Colonic mucosa (tissue), 4 donors: ENCODE measurements at regions of chr11 and their contacts with region 1.

Region 1: DNA sequence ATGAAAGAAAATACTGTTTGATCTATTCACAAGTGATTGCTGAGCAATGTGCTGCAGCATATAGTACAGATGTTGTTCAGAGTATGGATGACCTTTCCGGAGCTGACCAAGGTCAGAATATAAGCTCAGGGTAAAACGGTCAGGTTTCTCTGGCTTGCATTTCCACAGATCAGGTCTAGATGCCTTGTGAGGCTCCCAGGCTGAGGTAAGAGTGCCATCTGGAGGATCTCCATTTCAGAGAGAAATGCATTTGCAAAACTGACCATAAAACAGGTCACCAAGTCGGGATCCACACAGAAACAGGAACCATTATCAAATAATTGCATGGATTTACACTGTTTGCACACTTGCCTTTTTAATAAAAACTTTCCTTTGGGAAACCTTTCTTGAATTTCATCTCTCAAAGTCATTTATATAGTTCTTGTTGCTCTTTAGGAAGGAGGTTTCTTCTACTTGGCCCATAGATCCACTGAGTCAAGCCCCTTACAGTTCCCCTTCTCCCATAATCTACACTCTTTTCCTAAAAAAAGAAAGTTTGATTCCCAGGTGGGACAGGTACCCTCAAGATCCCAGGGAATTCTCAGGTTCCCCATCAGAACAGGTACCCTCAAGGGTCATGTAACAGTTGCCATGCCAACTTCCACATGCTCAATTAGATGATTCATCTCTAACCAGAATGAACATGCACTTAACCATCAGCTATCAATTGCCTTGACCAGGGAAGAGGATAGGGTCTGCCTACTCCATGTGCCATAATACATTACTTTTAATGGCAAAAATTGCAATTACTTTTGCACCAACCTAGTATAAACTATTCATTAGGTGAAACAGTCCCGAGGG is 25.0 kb upstream of the TMPRSS5 start:
- DNase-seq: peak; percentile 35
- H3K4me3 ChIP-seq: no peak overlapping the region
- H3K27ac ChIP-seq: no peak overlapping the region
- H3K4me1 ChIP-seq: no peaks in the 10 kb centered on the region
- H3K27me3 ChIP-seq: no peaks in the 10 kb centered on the region
- CTCF ChIP-seq: peak; percentile 51

Region 2: GRCh38 chr11:112844517-112844916 is 886.6 kb before region 1 on chr11:
- intact Hi-C with region 1: loop called (anchors 5 kb)
- DNase-seq: no peak
- H3K4me3 ChIP-seq: no peak overlapping the region
- H3K27ac ChIP-seq: no peak overlapping the region
- H3K4me1 ChIP-seq: no peaks in the 10 kb centered on the region
- H3K27me3 ChIP-seq: no peaks in the 10 kb centered on the region
- CTCF ChIP-seq: no peak

Region 3: DNA sequence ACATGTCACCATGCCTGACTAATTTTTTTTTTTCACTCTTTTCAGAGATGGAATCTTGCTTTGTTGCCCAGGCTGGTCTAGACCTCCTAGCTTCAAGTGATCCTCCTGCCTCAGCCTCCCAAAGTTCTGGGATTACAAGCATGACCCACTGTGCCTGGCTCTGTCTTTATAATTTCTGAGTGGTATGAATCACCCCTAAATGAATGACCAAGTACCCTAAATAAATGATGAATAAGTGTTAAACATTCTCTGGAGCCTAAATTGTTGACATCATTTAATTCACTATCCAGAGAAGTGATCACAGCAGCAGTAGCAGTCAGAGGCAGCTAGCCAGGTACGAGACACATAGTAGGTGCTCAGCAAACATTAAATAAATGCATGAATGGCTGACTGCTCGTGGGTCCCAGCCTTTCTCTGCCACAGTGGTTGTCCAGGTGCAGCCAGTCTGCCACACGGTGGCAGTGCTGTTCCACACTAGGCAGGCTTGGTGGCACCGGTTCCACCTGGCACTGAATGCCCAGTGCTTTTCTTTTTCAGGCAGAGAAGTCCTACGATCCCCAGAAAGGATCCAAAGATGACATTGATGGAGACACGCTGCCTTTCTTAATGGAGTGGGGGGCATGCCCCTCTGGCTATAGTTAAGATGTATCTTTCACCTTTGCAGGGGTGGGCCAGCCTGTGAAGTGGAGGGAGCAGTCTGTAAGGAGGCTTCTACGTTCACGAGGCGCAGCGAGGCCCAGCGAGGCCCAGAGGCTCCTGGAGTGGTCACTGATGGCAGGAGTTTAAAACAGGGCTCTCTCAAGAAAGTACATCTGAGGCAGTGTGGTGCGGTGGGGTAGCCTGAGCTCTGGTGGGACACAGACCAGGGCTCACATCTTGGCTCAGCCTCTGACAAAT is 425.4 kb before region 1 on chr11:
- intact Hi-C with region 1: loop called (anchors 5 kb)
- DNase-seq: peak; percentile 75
- H3K4me3 ChIP-seq: no peak overlapping the region
- H3K27ac ChIP-seq: no peak overlapping the region
- H3K4me1 ChIP-seq: no peaks in the 10 kb centered on the region
- H3K27me3 ChIP-seq: no peaks in the 10 kb centered on the region
- CTCF ChIP-seq: peak; percentile 91

Region 4: DNA sequence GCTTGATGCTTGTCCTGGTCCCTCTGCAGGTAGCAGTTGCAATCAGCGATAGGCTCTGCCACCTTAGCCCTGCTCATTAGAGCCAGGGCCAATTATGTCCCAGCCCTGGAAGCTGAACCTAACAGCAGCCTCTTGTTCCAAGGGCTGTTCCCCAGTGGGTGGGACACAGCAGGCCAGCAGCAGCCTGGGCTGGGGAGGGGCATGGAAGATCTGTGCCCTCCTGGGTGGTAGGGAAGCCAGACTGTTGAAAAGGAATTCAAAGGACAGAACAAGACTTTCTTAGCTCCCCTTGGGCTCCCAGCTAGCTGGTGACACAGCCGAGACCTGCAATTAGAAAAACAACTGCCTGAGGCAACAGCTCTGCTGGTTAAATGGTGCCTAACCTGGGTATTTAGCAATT is 273.3 kb before region 1 on chr11:
- intact Hi-C with region 1: no loop called
- DNase-seq: peak; percentile 44
- H3K4me3 ChIP-seq: no peak overlapping the region
- H3K27ac ChIP-seq: no peak overlapping the region
- H3K4me1 ChIP-seq: no peaks in the 10 kb centered on the region
- H3K27me3 ChIP-seq: no peaks in the 10 kb centered on the region
- CTCF ChIP-seq: no peak

Region 5: GRCh38 chr11:113532697-113533424 is 198.2 kb before region 1 on chr11:
- intact Hi-C with region 1: loop called (anchors 10 kb)
- DNase-seq: peak; percentile 75
- H3K4me3 ChIP-seq: no peak overlapping the region
- H3K27ac ChIP-seq: no peak overlapping the region
- H3K4me1 ChIP-seq: no peaks in the 10 kb centered on the region
- H3K27me3 ChIP-seq: no peaks in the 10 kb centered on the region
- CTCF ChIP-seq: peak; percentile 77

Region 6: DNA sequence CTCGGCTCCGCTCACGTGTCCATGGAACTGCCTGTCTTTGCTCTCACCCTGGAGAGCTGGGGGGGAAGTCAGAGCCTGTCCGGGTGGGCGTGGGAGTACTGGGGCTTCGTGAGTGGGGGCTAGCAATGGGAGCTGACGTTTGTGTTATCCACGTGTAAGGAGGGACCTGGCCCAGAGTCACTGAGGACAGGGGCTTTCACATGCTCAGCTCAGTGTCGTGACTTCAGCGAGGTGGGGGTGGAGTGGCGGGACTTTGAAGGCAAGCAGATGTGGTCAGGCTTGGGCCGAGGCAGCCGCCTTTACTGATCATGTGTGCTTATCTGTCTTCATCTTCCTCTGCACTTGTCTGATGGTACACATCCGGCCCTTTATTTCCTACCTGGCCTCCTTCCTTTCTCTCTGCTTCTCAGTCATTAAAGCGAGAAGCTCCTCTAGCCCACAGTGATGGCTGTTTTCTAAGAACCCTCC is 452.0 kb after region 1 on chr11:
- intact Hi-C with region 1: no loop called
- DNase-seq: no peak
- H3K4me3 ChIP-seq: no peak overlapping the region
- H3K27ac ChIP-seq: no peak overlapping the region
- H3K4me1 ChIP-seq: peaks cover 17% of the 10 kb centered on the region
- H3K27me3 ChIP-seq: no peaks in the 10 kb centered on the region
- CTCF ChIP-seq: no peak